Ascending aorta (tissue), 2 donors: ENCODE measurements at regions of chrX and their contacts with region 1.

Region 1: GRCh38 chrX:50691820-50692219 is 122.2 kb downstream of the SHROOM4 start:
- DNase-seq: no peak
- H3K4me3 ChIP-seq: no peak overlapping the region
- H3K27ac ChIP-seq: no peak overlapping the region
- H3K4me1 ChIP-seq: no peaks in the 10 kb centered on the region
- H3K27me3 ChIP-seq: no peaks in the 10 kb centered on the region
- CTCF ChIP-seq: peak; percentile 44 to 64 (median 51)

Region 2: DNA sequence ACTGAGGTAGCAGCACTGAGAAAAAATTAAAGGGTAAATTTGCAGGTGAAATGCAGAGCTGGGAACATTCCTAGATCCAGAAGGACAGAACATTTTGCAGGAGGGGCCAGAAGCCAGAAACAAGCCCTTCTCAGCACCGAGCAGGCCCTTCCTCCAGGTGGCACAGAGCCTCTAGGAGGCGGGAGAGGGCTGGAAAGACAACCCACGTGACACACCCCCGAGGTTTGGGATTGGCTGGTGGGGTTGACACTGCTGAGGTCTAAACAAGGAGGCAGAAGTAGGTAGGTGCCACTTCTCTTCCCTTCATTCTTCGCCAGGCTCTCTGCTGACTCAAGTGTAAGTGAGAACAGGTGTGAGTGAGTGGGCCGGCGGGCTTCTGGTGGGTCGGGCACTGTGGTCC is 862.8 kb before region 1 on chrX and contains the start of gene PAGE4:
- intact Hi-C with region 1: no loop called
- DNase-seq: no peak
- H3K4me3 ChIP-seq: no peak within 1 kb of the TSS
- H3K27ac ChIP-seq: no peak within 1 kb of the TSS
- H3K4me1 ChIP-seq: no peaks in the 10 kb centered on the region
- H3K27me3 ChIP-seq: no peaks in the 10 kb centered on the region
- CTCF ChIP-seq: no peak
- total RNA-seq, gene PAGE4: not detected

Region 3: GRCh38 chrX:50393902-50394301 is 297.9 kb before region 1 on chrX:
- intact Hi-C with region 1: no loop called
- DNase-seq: no peak
- H3K4me3 ChIP-seq: no peak overlapping the region
- H3K27ac ChIP-seq: no peak overlapping the region
- H3K4me1 ChIP-seq: no peaks in the 10 kb centered on the region
- H3K27me3 ChIP-seq: no peaks in the 10 kb centered on the region
- CTCF ChIP-seq: no peak

Region 4: DNA sequence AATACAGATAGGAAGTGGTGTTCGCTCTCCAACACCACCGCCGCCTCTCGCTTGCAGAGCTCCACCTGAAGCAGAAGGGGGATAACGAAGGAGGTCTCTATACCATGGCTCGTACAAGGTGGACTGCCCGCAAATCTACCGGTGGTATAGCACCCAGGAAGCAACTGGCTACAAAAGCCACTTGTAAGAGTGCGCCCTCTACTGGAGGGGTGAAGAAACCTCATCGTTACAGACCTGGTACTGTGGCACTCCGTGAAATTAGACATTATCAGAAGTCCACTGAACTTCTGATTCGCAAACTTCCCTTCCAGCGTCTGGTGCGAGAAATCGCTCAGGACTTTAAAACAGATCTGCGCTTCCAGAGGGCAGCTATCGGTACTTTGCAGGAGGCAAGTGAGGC is 213.5 kb after region 1 on chrX:
- intact Hi-C with region 1: loop called (anchors 5 kb)
- DNase-seq: no peak
- H3K4me3 ChIP-seq: no peak overlapping the region
- H3K27ac ChIP-seq: no peak overlapping the region
- H3K4me1 ChIP-seq: no peaks in the 10 kb centered on the region
- H3K27me3 ChIP-seq: no peaks in the 10 kb centered on the region
- CTCF ChIP-seq: no peak

Region 5: GRCh38 chrX:50920132-50920531 is 228.3 kb after region 1 on chrX:
- intact Hi-C with region 1: loop called (anchors 5 kb)
- DNase-seq: no peak
- H3K4me3 ChIP-seq: no peak overlapping the region
- H3K27ac ChIP-seq: no peak overlapping the region
- H3K4me1 ChIP-seq: no peaks in the 10 kb centered on the region
- H3K27me3 ChIP-seq: no peaks in the 10 kb centered on the region
- CTCF ChIP-seq: peak in 2 of 3 experiments; percentile 5 to 29

Region 6: DNA sequence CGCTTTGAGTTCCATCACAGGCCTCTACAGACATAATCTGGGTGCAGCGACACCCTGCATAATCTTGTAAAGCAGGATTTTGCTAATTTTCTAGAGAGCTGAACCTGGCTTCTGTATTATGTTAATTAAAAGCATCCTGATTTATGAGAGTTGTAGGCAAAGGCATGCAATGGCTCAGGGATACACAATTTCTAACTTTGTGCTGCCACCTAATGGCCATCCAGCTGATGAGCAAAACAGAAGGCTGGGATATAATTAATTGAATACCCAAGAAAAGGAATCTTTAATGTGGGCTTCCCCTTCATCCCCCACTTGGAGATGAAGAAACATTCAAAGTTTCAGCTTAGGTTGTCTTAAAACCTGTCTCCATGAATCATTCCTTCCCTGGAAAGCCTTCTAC is 296.8 kb after region 1 on chrX:
- intact Hi-C with region 1: loop called (anchors 5 kb)
- DNase-seq: no peak
- H3K4me3 ChIP-seq: no peak overlapping the region
- H3K27ac ChIP-seq: no peak overlapping the region
- H3K4me1 ChIP-seq: no peaks in the 10 kb centered on the region
- H3K27me3 ChIP-seq: no peaks in the 10 kb centered on the region
- CTCF ChIP-seq: peak in 2 of 3 experiments; percentile 32 to 48

Region 7: GRCh38 chrX:51420610-51421009 is 728.8 kb after region 1 on chrX:
- intact Hi-C with region 1: loop called (anchors 5 kb)
- DNase-seq: no peak
- H3K4me3 ChIP-seq: no peak overlapping the region
- H3K27ac ChIP-seq: no peak overlapping the region
- H3K4me1 ChIP-seq: no peaks in the 10 kb centered on the region
- H3K27me3 ChIP-seq: no peaks in the 10 kb centered on the region
- CTCF ChIP-seq: peak; percentile 32 to 73 (median 70)